ENCODE measurements at regions of chr6 and their contacts with region 1.

Region 1: GRCh38 chr6:137938770-137939379 is 71.8 kb downstream of the TNFAIP3 start:
- DNase-seq: no peak
- H3K4me3 Mint-ChIP-seq: no peak overlapping the region
- H3K27ac Mint-ChIP-seq: peak overlapping the region; percentile 80
- H3K4me1 Mint-ChIP-seq: peaks cover 43% of the 10 kb centered on the region
- H3K27me3 Mint-ChIP-seq: no peaks in the 10 kb centered on the region

Region 2: GRCh38 chr6:137894779-137895385 is 44.0 kb before region 1 on chr6:
- CTCF ChIA-PET with region 1: interaction called, 12 read pairs
- intact Hi-C with region 1: no loop called
- DNase-seq: no peak
- H3K4me3 Mint-ChIP-seq: no peak overlapping the region
- H3K27ac Mint-ChIP-seq: no peak overlapping the region
- H3K4me1 Mint-ChIP-seq: peaks cover 45% of the 10 kb centered on the region
- H3K27me3 Mint-ChIP-seq: no peaks in the 10 kb centered on the region

Region 3: GRCh38 chr6:137951064-137951597 is 12.3 kb after region 1 on chr6:
- CTCF ChIA-PET with region 1: interaction called, 11 read pairs
- intact Hi-C with region 1: no loop called
- DNase-seq: no peak
- H3K4me3 Mint-ChIP-seq: no peak overlapping the region
- H3K27ac Mint-ChIP-seq: no peak overlapping the region
- H3K4me1 Mint-ChIP-seq: peaks cover 31% of the 10 kb centered on the region
- H3K27me3 Mint-ChIP-seq: no peaks in the 10 kb centered on the region